GM12878 (cell line): ENCODE measurements at regions of chr4 and their contacts with region 1.

Region 1: DNA sequence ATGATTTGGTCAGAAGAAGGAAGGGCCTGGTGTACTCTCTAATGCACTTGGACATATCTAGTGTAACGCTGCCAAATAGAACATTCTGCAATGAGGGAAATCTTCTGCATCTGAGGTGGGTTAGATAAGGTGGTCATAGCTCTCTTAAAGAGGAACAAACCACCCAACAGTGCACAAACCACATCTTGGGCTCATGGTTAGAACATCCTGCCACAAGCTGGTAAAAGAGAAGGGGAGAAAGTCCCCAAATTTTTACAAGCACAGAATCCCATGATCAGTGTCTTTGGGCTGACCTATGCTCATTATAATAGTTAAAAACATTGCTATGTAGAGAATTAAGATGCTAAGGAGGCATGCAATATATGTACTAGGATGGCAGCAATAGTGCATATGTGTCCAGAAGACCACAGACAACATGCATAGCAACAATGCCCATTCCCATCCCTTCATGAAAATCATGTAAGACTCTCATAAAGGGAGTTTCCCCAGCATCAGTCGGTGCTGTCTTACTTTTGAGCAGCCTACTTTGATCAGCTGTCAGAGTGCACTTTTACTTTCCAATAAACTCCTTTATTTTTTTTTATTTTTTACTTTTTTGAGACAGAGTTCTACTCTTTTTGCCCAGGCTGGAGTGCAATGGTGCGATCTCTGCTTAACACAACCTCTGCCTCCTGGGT is 99.7 kb upstream of the SLC7A11 start:
- DNase-seq: peak; percentile 72
- ATAC-seq: peak; percentile 91
- H3K4me3 ChIP-seq: no peak overlapping the region
- H3K27ac ChIP-seq: peak overlapping the region; percentile 46; the same call in 1 of the 2 replicates
- H3K4me1 ChIP-seq: peaks cover 7% of the 10 kb centered on the region
- H3K27me3 ChIP-seq: no peaks in the 10 kb centered on the region
- CTCF ChIP-seq: no peak
- EP300 ChIP-seq: no peak
- POLR2A ChIP-seq: no peak
- RAD21 ChIP-seq: no peak

Region 2: GRCh38 chr4:138078751-138079520 is 262.9 kb before region 1 on chr4:
- CTCF ChIA-PET with region 1: no interaction called
- POLR2A ChIA-PET with region 1: no interaction called
- RAD21 ChIA-PET with region 1: no interaction called
- SMC1A ChIA-PET with region 1: no interaction called
- in situ Hi-C with region 1: no loop called
- intact Hi-C with region 1: no loop called
- DNase-seq: no peak
- ATAC-seq: no peak
- H3K4me3 ChIP-seq: no peak overlapping the region
- H3K27ac ChIP-seq: no peak overlapping the region
- H3K4me1 ChIP-seq: no peaks in the 10 kb centered on the region
- H3K27me3 ChIP-seq: no peaks in the 10 kb centered on the region
- CTCF ChIP-seq: no peak
- EP300 ChIP-seq: no peak
- POLR2A ChIP-seq: no peak
- RAD21 ChIP-seq: no peak

Region 3: DNA sequence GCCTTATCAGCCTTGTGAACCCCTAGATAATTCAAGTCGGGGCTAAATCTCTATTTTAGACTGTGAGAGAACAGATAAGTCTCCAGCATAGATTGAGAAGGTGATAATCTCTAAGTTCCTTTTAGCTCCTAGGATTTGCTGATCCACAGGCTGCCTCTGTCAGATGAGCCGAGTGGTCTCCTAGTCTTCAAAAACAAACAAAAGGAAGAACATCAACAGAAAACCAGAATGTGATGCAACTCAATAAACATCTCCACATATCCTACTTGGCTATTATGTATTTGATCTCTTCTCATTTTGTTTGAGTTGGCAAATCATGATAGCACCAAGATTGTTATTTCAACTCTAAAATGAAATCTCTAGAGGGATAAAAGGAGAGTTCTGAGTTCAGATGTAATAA is 11.3 kb before region 1 on chr4:
- CTCF ChIA-PET with region 1: interaction called, 10 read pairs
- POLR2A ChIA-PET with region 1: no interaction called
- RAD21 ChIA-PET with region 1: interaction called, 8 read pairs
- SMC1A ChIA-PET with region 1: interaction called, 56 read pairs
- in situ Hi-C with region 1: no loop called
- intact Hi-C with region 1: no loop called
- DNase-seq: no peak
- ATAC-seq: no peak
- H3K4me3 ChIP-seq: no peak overlapping the region
- H3K27ac ChIP-seq: no peak overlapping the region
- H3K4me1 ChIP-seq: no peaks in the 10 kb centered on the region
- H3K27me3 ChIP-seq: no peaks in the 10 kb centered on the region
- CTCF ChIP-seq: no peak
- EP300 ChIP-seq: no peak
- POLR2A ChIP-seq: no peak
- RAD21 ChIP-seq: no peak